ENCODE measurements at regions of chr9 and their contacts with region 1.

Region 1: DNA sequence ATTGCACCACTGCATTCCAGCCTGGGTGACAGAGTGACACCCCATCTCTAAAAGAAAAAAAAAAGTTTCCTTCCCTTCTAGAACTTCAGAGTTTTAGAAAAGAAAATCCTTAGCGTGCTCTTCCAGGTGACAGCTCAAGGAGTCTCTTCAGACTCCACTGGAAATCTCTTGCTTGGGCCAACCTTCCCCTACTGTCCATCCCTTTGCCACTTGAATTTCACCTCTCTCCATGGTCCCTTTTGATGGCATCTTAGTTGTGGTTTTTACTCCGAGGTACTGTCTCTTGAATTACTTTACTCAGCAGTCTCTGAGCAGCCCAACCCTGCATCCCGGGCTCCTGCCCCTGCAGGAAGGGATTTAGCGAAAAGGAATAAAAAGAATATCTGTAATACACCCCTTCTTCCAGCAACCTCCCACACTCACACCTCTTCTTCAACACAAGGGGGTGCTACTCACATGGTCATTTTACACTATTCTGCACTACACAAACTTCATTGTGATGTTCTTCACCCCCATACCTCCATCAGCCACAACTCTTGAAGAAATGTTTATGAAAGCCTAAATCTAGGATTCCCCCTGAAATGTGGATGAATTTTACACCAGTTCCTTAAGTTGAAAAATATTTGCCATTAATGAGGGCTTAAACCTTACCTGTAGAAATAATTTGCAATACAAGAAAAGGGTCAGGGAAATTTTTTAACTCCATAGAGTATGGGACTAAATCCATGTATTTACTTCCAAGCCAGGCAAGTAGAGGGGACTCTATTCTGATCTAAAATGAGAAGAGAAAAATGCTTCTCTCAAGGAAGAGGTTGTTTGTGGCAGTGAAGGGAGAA is 25.9 kb downstream of the TPD52L3 start:
- DNase-seq: peak; percentile 45
- ATAC-seq: peak; percentile 95
- H3K4me3 ChIP-seq: no peak overlapping the region
- H3K27ac ChIP-seq: no peak overlapping the region
- H3K4me1 ChIP-seq: peaks cover 15% of the 10 kb centered on the region
- H3K27me3 ChIP-seq: no peaks in the 10 kb centered on the region
- CTCF ChIP-seq: peak; percentile 68 to 74 (median 74); a peak in 5 of 6 replicates
- EP300 ChIP-seq: no peak
- POLR2A ChIP-seq: no peak
- RAD21 ChIP-seq: peak; percentile 85

Region 2: GRCh38 chr9:6412487-6413364 is 58.7 kb after region 1 on chr9 and contains the start of gene UHRF2:
- CTCF ChIA-PET with region 1: interaction called, 12 read pairs
- POLR2A ChIA-PET with region 1: interaction called, 5 read pairs
- RAD21 ChIA-PET with region 1: interaction called, 27 read pairs
- SMC1A ChIA-PET with region 1: interaction called, 29 read pairs
- in situ Hi-C with region 1: no loop called
- intact Hi-C with region 1: loop called (anchors 2 kb)
- DNase-seq: peak; percentile 93
- ATAC-seq: peak; percentile 90
- H3K4me3 ChIP-seq: peak within 1 kb of the TSS; percentile 86
- H3K27ac ChIP-seq: peak within 1 kb of the TSS; percentile 86
- H3K4me1 ChIP-seq: peaks cover 12% of the 10 kb centered on the region; the same call in 1 of the 2 replicates
- H3K27me3 ChIP-seq: no peaks in the 10 kb centered on the region
- CTCF ChIP-seq: no peak
- EP300 ChIP-seq: peak in 1 of 2 experiments; percentile 71; a peak in 3 of 4 replicates
- POLR2A ChIP-seq: peak; percentile 96
- RAD21 ChIP-seq: 0 out of 2 replicates have a peak, but pooled peaks have one; percentile 13
- polyA plus RNA-seq, gene UHRF2: 11.2 to 14.2 TPM

Region 3: DNA sequence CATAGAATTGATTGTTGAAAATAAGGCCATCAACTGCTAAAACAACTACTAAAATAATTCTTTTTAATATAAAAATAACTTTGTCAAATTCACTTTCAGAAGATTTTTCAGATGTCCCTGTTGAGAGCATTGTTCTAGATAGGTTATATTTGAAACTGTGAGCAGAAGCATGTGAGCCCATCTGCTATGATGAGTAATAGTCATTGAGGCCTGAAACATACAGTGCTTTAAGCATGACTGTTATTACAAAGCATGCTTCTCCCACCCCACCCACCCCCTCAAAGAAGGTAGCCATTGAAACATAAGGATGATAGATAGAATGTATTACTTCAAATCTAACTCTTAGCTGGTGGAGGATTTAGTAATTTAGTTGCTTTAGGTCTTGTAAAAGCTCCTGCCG is 144.9 kb after region 1 on chr9:
- CTCF ChIA-PET with region 1: interaction called, 6 read pairs
- POLR2A ChIA-PET with region 1: no interaction called
- RAD21 ChIA-PET with region 1: interaction called, 10 read pairs
- SMC1A ChIA-PET with region 1: interaction called, 17 read pairs
- in situ Hi-C with region 1: no loop called
- intact Hi-C with region 1: loop called (anchors 5 kb)
- DNase-seq: no peak
- ATAC-seq: no peak
- H3K4me3 ChIP-seq: no peak overlapping the region
- H3K27ac ChIP-seq: no peak overlapping the region
- H3K4me1 ChIP-seq: no peaks in the 10 kb centered on the region
- H3K27me3 ChIP-seq: no peaks in the 10 kb centered on the region
- CTCF ChIP-seq: no peak
- EP300 ChIP-seq: no peak
- POLR2A ChIP-seq: no peak
- RAD21 ChIP-seq: no peak

Region 4: DNA sequence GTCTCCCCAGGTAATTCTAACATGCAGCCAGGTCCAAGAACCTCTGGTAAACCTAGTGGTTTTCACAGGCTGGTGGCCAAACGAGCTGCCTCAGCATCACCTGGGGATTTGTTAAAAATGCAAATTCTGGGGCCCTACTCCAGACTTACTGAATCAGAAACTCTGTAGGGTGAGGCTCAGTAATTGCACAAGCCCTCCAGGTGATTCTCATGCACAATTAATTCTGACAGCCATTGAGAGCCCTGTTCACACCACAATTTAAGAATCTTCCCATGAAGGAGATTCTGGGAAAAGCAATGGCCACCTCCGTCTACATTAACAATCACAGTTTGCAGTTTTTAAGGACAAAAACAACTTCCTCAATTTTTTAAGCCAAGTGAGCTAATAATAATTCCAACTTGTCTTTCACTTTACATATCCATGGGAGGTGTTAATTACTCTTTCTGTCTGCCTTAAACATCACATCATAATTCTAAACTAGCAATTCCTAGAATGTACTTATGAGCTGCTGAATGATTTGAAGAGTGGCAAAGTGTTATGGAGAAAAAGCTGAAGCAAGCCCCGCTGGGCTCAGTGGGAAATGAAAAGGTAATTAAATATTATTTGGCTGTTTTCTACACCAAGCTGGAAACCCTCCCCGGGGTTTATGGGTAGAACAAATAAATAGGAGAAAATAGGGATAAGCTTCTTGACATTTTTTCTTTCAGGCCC is 221.4 kb after region 1 on chr9:
- CTCF ChIA-PET with region 1: interaction called, 123 read pairs
- POLR2A ChIA-PET with region 1: interaction called, 3 read pairs
- RAD21 ChIA-PET with region 1: interaction called, 41 read pairs
- SMC1A ChIA-PET with region 1: interaction called, 84 read pairs
- in situ Hi-C with region 1: no loop called
- intact Hi-C with region 1: no loop called
- DNase-seq: peak; percentile 53
- ATAC-seq: peak; percentile 95
- H3K4me3 ChIP-seq: no peak overlapping the region
- H3K27ac ChIP-seq: peak overlapping the region; percentile 4; the same call in 1 of the 2 replicates
- H3K4me1 ChIP-seq: peaks cover 18% of the 10 kb centered on the region
- H3K27me3 ChIP-seq: no peaks in the 10 kb centered on the region
- CTCF ChIP-seq: no peak
- EP300 ChIP-seq: no peak
- POLR2A ChIP-seq: no peak
- RAD21 ChIP-seq: no peak

Region 5: GRCh38 chr9:6739218-6739617 is 385.1 kb after region 1 on chr9:
- CTCF ChIA-PET with region 1: interaction called, 14 read pairs
- POLR2A ChIA-PET with region 1: no interaction called
- RAD21 ChIA-PET with region 1: interaction called, 9 read pairs
- SMC1A ChIA-PET with region 1: interaction called, 5 read pairs
- in situ Hi-C with region 1: no loop called
- intact Hi-C with region 1: loop called (anchors 10 kb)
- DNase-seq: no peak
- ATAC-seq: peak; percentile 59
- H3K4me3 ChIP-seq: no peak overlapping the region
- H3K27ac ChIP-seq: no peak overlapping the region
- H3K4me1 ChIP-seq: no peaks in the 10 kb centered on the region
- H3K27me3 ChIP-seq: no peaks in the 10 kb centered on the region
- CTCF ChIP-seq: peak; percentile 8 to 46 (median 36); a peak in 4 of 6 replicates
- EP300 ChIP-seq: no peak
- POLR2A ChIP-seq: no peak
- RAD21 ChIP-seq: peak; percentile 57